Activated CD4-positive, alpha-beta T cell treated with anti-CD3 and anti-CD28 coated beads, Interleukin-2, amount 10 ng/mL, durations not matched to agents 24 days and 14 days (primary cell): ENCODE measurements at regions of chr2 and their contacts with region 1.

Region 1: DNA sequence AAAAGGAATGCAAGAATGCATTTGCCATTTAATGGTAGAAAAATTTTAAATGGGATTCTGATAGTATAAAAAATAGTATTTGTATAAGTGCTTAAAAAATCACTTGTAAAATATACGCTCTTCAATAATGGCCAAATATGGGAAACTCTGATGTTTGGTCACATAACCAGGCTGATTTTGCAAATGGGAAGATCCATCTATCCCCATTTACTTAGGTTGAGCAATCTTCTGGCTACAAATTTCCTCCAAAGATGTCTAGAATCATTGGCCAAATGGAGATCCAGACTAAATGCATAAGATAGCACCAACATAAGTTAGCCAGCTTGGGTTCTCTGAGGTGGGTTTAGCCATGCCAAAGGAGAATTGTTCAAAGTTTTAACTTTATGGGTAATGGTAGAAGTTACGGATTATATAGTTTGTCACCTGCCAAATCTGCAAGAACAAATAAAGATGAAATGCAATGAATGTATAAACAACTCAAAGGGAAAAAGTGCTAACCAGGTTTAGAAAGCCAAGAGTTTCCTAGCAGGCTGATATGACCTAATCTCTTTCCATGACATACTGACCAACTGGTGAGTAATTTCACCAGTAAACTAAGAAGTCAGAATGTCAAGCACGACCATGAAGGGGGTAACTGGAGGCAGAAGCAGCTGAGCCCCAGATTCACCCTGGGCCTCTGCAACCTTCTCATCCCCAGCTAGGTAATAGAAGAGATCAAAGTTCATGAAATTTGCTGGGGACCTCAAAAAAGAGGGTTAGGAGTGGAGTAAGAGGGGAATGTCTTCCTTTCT is 10.0 kb downstream of the RHOB start:
- DNase-seq: no peak
- H3K4me3 Mint-ChIP-seq: no peak overlapping the region
- H3K27ac Mint-ChIP-seq: peak overlapping the region; percentile 75
- H3K4me1 Mint-ChIP-seq: peaks cover 8% of the 10 kb centered on the region
- H3K27me3 Mint-ChIP-seq: peaks cover 31% of the 10 kb centered on the region

Region 2: DNA sequence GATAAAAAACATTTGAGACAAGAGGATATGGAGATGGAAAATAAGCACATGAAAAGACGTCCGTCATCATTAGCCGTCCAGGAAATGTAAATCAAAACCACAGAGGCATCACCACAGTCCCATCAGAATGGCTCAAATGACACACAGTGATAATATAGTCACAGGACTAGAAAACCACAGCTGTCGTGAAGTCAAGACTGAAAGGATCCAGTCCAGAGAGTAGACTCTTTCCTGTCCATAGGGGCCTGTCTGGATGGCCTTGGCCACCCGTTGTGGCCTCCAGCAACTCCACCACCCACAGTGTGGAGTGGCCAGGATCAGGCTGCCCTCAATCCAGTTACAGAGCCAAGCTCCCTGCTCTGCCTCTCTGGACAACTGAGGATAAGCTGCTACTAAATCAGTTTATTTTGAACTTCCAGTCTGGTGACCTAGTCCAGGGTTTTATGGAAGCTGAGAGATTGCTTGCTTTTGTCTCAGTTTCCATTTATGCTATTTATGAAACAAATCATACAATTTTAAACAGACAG is 50.4 kb after region 1 on chr2:
- intact Hi-C with region 1: loop called (anchors 5 kb)
- DNase-seq: no peak
- H3K4me3 Mint-ChIP-seq: no peak overlapping the region
- H3K27ac Mint-ChIP-seq: no peak overlapping the region
- H3K4me1 Mint-ChIP-seq: peaks cover 5% of the 10 kb centered on the region
- H3K27me3 Mint-ChIP-seq: peaks cover 3% of the 10 kb centered on the region

Region 3: DNA sequence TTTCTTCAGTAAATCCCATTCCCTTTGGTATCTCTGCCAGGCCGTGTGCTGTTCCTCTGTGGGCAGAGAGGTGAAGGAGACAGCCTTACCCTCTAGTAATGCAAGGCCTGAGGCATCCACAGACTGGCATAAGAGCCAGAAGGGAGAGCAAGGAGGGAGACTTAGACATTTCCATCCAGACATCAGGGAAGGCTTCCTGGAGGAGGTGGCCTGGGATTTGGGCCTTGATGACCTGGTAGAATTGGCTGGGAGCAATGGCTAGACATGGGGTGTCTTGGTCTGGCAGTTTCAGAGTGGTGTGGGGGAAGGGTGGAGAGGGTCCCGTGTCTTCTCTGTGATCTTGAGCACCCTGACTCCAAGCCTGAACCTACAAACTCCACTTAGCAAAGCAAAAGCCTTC is 71.9 kb after region 1 on chr2:
- intact Hi-C with region 1: no loop called
- DNase-seq: no peak
- H3K4me3 Mint-ChIP-seq: no peak overlapping the region
- H3K27ac Mint-ChIP-seq: no peak overlapping the region
- H3K4me1 Mint-ChIP-seq: no peaks in the 10 kb centered on the region
- H3K27me3 Mint-ChIP-seq: peaks cover 3% of the 10 kb centered on the region

Region 4: GRCh38 chr2:20539133-20539719 is 82.4 kb after region 1 on chr2:
- intact Hi-C with region 1: no loop called
- DNase-seq: no peak
- H3K4me3 Mint-ChIP-seq: no peak overlapping the region
- H3K27ac Mint-ChIP-seq: no peak overlapping the region
- H3K4me1 Mint-ChIP-seq: no peaks in the 10 kb centered on the region
- H3K27me3 Mint-ChIP-seq: no peaks in the 10 kb centered on the region

Region 5: DNA sequence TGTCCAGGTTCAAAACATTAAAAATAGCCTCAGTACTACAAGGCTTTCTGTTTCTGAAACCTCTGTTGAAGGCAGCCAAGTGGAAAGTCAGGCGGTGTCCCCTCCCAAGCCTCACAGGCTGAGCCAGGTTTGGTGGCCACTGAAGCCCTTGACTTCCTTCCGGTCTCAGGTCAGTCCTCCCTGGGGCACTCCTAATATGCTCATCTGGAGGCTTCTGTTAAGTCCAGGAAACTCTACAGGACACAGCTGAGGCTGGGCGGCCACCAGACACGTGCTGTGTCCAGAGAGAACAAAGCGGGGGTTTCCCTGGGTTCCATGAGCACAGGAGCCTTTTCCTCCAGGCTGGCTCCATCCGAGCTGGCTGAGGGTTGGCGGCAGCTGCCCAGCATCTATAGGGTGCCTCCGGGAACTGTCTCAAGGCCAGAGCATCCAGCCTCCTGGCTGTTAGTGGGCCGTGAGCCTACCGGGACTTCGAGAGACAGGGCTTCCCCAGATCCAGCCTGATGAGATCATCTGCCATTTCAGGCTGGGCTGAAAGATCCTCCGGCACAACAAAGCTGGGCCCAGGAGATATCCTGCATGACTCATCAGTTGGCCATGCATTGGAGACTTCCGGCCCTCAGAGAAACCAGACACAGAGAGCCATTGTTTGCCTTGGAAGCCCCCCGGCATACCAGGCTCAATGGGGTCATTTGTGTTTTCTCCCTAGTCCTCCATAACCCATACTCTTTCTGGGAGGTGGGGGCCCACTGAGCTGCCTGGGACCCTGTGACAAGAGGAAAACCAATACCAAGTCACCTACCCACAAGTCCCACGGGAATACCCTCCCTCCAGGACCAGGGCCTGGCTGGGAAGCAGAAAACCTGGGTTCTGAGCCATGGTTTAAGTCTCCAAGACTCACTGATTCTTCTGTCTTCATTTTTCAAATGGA is 122.3 kb after region 1 on chr2:
- intact Hi-C with region 1: loop called (anchors 5 kb)
- DNase-seq: no peak
- H3K4me3 Mint-ChIP-seq: no peak overlapping the region
- H3K27ac Mint-ChIP-seq: no peak overlapping the region
- H3K4me1 Mint-ChIP-seq: peaks cover 25% of the 10 kb centered on the region
- H3K27me3 Mint-ChIP-seq: no peaks in the 10 kb centered on the region